ENCODE measurements at regions of chr7 and their contacts with region 1.

Region 1: DNA sequence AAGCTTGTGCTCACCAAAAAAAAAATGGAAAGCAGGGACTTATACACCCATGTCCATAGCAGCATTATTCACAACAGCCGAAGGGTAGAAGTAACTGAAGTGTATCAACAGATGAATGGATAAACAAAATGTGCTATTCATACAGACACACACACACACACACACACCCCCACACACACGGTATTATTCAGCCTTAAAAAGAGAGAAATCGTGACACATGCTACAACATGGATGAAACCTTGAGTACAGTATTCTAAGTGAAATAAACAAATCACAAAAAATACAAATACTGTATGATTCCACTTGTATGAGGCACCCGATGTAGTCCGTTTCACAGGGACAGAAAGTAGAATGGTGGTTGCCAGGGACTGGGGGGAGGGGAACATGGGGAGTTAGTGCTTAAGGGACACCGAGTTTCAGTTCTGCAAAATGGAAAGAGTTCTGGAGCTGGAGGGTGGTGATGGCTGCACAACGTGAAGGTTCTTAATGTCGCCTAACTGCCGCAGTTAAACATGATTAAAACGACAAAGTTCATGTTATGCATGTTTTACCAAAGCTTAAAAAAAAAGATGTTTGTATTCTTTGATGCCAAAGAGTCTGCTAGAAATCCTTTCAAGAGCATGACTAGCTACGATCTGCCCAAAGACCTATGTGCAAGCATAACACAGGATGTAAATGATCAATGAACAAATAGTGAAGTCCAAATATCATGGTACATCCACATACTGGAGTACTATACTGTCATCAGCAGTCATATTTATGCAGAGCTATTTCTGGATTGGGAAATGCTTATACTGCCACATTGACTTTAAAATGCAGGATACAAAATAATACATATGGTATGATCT is 7.2 kb downstream of the TNS3 start:
- DNase-seq: no peak
- H3K4me3 ChIP-seq: no peak overlapping the region
- H3K4me3 Mint-ChIP-seq: peak overlapping the region; percentile 71
- H3K27ac Mint-ChIP-seq: peak overlapping the region; percentile 92
- H3K4me1 ChIP-seq: peaks cover 88% of the 10 kb centered on the region
- H3K4me1 Mint-ChIP-seq: peaks cover 70% of the 10 kb centered on the region
- H3K27me3 ChIP-seq: no peaks in the 10 kb centered on the region
- H3K27me3 Mint-ChIP-seq: no peaks in the 10 kb centered on the region
- CTCF ChIP-seq: no peak

Region 2: GRCh38 chr7:47474937-47475878 is 99.5 kb before region 1 on chr7:
- CTCF ChIA-PET with region 1: interaction called, 3 read pairs
- POLR2A ChIA-PET with region 1: interaction called, 4 read pairs
- intact Hi-C with region 1: loop called (anchors 1 kb)
- DNase-seq: peak; percentile 84 to 92
- H3K4me3 ChIP-seq: no peak overlapping the region
- H3K4me3 Mint-ChIP-seq: no peak overlapping the region
- H3K27ac Mint-ChIP-seq: no peak overlapping the region
- H3K4me1 ChIP-seq: peaks cover 63% of the 10 kb centered on the region
- H3K4me1 Mint-ChIP-seq: peaks cover 32% of the 10 kb centered on the region
- H3K27me3 ChIP-seq: no peaks in the 10 kb centered on the region
- H3K27me3 Mint-ChIP-seq: no peaks in the 10 kb centered on the region
- CTCF ChIP-seq: no peak

Region 3: DNA sequence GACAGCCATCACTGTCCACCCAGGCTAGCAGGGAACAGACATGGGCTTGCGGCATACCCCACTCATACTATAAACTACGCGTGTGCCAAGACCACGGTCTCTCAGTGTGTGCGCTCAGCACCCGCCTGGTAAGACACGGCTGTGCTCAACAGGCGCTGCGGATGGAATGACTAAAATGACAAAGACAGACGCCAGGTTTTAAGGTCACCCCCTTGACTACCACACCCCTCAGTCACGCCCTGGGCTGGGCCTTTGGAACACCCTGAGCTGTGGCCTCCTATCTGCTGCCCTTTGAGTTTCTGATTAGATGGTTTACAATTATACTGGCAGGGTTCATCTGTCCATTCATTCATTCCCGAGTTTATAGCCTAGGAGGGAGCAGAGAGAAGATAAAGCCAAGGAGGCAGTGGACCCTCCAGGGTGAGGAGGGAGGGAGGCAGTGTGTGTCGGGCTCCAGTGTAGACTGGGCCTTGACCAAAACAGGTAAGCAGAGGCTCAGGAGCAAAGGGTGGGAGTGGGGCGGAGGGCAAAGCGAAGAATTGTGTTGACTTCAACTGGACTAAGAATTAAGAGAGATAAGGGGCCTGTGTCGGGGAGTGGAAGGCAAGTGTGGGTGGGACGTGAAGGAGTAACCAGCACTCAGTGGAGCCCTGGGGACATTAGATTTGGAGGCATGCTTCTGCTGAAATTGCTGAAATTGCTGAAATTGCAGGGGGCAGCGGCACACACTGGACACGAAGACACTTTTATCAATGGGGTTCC is 27.8 kb before region 1 on chr7:
- CTCF ChIA-PET with region 1: no interaction called
- POLR2A ChIA-PET with region 1: no interaction called
- intact Hi-C with region 1: no loop called
- DNase-seq: peak; percentile 34 to 76
- H3K4me3 ChIP-seq: no peak overlapping the region
- H3K4me3 Mint-ChIP-seq: peak overlapping the region; percentile 18
- H3K27ac Mint-ChIP-seq: peak overlapping the region; percentile 74
- H3K4me1 ChIP-seq: peaks cover 67% of the 10 kb centered on the region
- H3K4me1 Mint-ChIP-seq: peaks cover 50% of the 10 kb centered on the region
- H3K27me3 ChIP-seq: no peaks in the 10 kb centered on the region
- H3K27me3 Mint-ChIP-seq: no peaks in the 10 kb centered on the region
- CTCF ChIP-seq: no peak

Region 4: GRCh38 chr7:47557169-47557985 is 17.3 kb before region 1 on chr7:
- CTCF ChIA-PET with region 1: interaction called, 4 read pairs
- POLR2A ChIA-PET with region 1: interaction called, 13 read pairs
- intact Hi-C with region 1: loop called (anchors 1 kb)
- DNase-seq: no peak
- H3K4me3 ChIP-seq: no peak overlapping the region
- H3K4me3 Mint-ChIP-seq: peak overlapping the region; percentile 37
- H3K27ac Mint-ChIP-seq: peak overlapping the region; percentile 92
- H3K4me1 ChIP-seq: peaks cover 81% of the 10 kb centered on the region
- H3K4me1 Mint-ChIP-seq: peaks cover 61% of the 10 kb centered on the region
- H3K27me3 ChIP-seq: no peaks in the 10 kb centered on the region
- H3K27me3 Mint-ChIP-seq: no peaks in the 10 kb centered on the region
- CTCF ChIP-seq: no peak

Region 5: DNA sequence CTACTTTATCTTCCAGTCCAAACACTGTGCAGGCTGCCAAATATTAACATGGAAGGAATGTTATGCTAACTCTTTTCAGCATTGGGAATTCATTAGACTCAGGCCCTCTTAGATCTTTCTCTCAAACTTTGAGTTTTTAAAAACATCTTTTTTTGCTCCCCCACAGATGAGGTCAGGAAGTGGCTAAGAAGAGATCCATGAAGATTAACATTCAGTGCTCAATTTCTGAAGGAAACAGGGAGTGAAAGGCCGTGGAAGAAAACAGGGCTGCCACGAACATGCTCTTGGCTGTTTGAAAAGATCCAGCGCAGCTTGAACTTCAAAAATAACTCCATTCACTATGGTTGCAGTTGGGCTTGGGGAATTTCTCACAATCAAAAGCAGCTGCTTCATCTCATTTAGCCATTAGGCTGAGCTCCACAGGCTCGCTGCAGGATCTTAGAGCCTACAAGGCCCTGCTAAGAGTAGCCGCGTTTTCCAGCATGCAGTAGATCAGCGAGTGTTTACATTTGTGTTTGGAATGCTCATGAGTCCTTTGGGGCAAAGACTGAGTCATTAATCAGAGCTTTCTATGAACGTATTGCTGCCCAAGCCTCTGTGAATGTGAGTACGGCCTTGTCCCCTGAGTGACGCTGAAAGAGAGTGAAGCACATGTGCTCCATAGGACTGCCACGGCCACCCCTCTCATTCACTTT is 48.4 kb after region 1 on chr7:
- CTCF ChIA-PET with region 1: no interaction called
- POLR2A ChIA-PET with region 1: interaction called, 8 read pairs
- intact Hi-C with region 1: loop called (anchors 5 kb)
- DNase-seq: peak; percentile 56 to 79
- H3K4me3 ChIP-seq: no peak overlapping the region
- H3K4me3 Mint-ChIP-seq: peak overlapping the region; percentile 16
- H3K27ac Mint-ChIP-seq: peak overlapping the region; percentile 77
- H3K4me1 ChIP-seq: peaks cover 57% of the 10 kb centered on the region
- H3K4me1 Mint-ChIP-seq: peaks cover 37% of the 10 kb centered on the region
- H3K27me3 ChIP-seq: no peaks in the 10 kb centered on the region
- H3K27me3 Mint-ChIP-seq: no peaks in the 10 kb centered on the region
- CTCF ChIP-seq: no peak

Region 6: GRCh38 chr7:47763063-47763974 is 188.6 kb after region 1 on chr7:
- CTCF ChIA-PET with region 1: interaction called, 5 read pairs
- POLR2A ChIA-PET with region 1: interaction called, 6 read pairs
- intact Hi-C with region 1: loop called (anchors 1 kb)
- DNase-seq: peak; percentile 92 to 96
- H3K4me3 ChIP-seq: no peak overlapping the region
- H3K4me3 Mint-ChIP-seq: peak overlapping the region; percentile 70
- H3K27ac Mint-ChIP-seq: peak overlapping the region; percentile 98
- H3K4me1 ChIP-seq: peaks cover 44% of the 10 kb centered on the region
- H3K4me1 Mint-ChIP-seq: peaks cover 34% of the 10 kb centered on the region
- H3K27me3 ChIP-seq: no peaks in the 10 kb centered on the region
- H3K27me3 Mint-ChIP-seq: no peaks in the 10 kb centered on the region
- CTCF ChIP-seq: no peak

Measured in Caco-2 (cell line).